ENCODE measurements at regions of chr6 and their contacts with region 1.

Region 1: GRCh38 chr6:35452186-35453090 is at the start of gene FANCE:
- DNase-seq: peak; percentile 95
- H3K4me3 Mint-ChIP-seq: peak within 1 kb of the TSS; percentile 79
- H3K27ac Mint-ChIP-seq: no peak within 1 kb of the TSS
- H3K4me1 Mint-ChIP-seq: peaks cover 31% of the 10 kb centered on the region
- H3K27me3 Mint-ChIP-seq: no peaks in the 10 kb centered on the region
- total RNA-seq, gene FANCE: 16.3 TPM

Region 2: GRCh38 chr6:35327349-35328027 is 125.0 kb before region 1 on chr6:
- CTCF ChIA-PET with region 1: interaction called, 12 read pairs
- intact Hi-C with region 1: no loop called
- DNase-seq: peak; percentile 91
- H3K4me3 Mint-ChIP-seq: no peak overlapping the region
- H3K27ac Mint-ChIP-seq: peak overlapping the region; percentile 70
- H3K4me1 Mint-ChIP-seq: peaks cover 19% of the 10 kb centered on the region
- H3K27me3 Mint-ChIP-seq: no peaks in the 10 kb centered on the region

Region 3: GRCh38 chr6:35415065-35415991 is 37.1 kb before region 1 on chr6:
- CTCF ChIA-PET with region 1: interaction called, 19 read pairs
- intact Hi-C with region 1: loop called (anchors 2 kb)
- DNase-seq: peak; percentile 51
- H3K4me3 Mint-ChIP-seq: no peak overlapping the region
- H3K27ac Mint-ChIP-seq: peak overlapping the region; percentile 10
- H3K4me1 Mint-ChIP-seq: peaks cover 44% of the 10 kb centered on the region
- H3K27me3 Mint-ChIP-seq: no peaks in the 10 kb centered on the region

Region 4: GRCh38 chr6:35468181-35468979 is 15.9 kb after region 1 on chr6 and contains the start of gene RPL10A:
- CTCF ChIA-PET with region 1: interaction called, 7 read pairs
- intact Hi-C with region 1: loop called (anchors 1 kb)
- DNase-seq: peak; percentile 98
- H3K4me3 Mint-ChIP-seq: peak within 1 kb of the TSS; percentile 95
- H3K27ac Mint-ChIP-seq: peak within 1 kb of the TSS; percentile 95
- H3K4me1 Mint-ChIP-seq: peaks cover 39% of the 10 kb centered on the region
- H3K27me3 Mint-ChIP-seq: no peaks in the 10 kb centered on the region
- total RNA-seq, gene RPL10A: 2,437 to 2,507 TPM

Region 5: DNA sequence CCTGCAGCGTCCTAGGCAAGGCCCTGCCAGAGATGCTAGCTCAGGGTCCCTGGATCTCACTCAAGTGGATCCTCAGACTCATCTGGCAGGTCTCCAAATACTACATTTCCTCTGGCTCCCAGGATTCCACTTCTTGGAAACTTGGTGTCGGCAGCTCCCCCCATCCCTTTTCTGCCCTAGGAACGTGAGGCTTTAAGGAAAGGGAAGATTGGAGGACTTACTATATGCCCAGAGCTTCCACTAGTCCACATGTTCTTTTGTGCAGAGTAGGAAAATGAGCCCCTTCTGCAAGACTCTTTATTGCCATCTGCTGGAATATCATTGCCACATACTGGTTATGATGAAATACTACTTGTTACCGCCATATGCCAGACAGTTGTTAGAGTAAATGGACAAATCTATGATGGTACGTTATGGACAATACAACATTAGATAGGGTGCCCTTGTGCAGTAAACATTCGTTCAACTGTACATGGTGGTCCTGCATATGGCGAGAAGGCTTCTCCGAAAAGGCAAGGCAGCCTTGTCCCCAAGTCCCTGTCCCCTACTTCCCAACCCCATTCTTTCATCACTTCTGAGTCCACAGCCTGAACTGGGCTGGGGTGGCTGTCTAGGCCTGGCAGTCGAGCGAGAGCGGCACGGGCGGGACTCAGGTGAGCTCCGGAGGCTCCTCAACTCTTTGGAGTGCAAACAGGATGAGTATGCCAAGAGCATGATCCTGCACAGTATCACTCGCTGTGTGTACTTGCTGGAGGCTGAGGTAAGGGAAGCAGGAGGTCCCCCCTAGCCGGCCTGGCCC is 285.2 kb after region 1 on chr6:
- CTCF ChIA-PET with region 1: no interaction called
- intact Hi-C with region 1: loop called (anchors 1 kb)
- DNase-seq: no peak
- H3K4me3 Mint-ChIP-seq: peak overlapping the region; percentile 29
- H3K27ac Mint-ChIP-seq: peak overlapping the region; percentile 77
- H3K4me1 Mint-ChIP-seq: peaks cover 47% of the 10 kb centered on the region
- H3K27me3 Mint-ChIP-seq: no peaks in the 10 kb centered on the region

Region 6: DNA sequence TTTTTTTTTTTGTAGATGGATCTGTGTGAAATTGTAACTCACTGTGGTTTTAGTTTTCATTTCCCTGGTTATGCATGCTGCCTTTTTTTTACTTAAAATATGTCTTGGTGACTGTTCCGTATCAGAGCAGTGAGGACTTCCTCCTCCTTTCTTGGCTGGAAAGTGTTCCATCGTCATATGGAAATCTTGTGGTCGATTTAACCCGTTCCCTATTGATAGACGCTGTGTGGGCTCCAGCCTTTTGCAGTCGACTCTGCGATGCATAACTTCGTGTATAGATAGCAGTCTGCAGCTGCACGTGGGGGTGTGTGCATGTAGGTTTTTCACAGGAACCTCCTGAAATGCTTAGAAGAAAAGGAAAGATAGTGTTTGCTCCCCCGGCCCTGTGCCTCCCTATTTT is 789.3 kb after region 1 on chr6:
- CTCF ChIA-PET with region 1: no interaction called
- intact Hi-C with region 1: no loop called
- DNase-seq: peak; percentile 17
- H3K4me3 Mint-ChIP-seq: no peak overlapping the region
- H3K27ac Mint-ChIP-seq: no peak overlapping the region
- H3K4me1 Mint-ChIP-seq: peaks cover 12% of the 10 kb centered on the region
- H3K27me3 Mint-ChIP-seq: peaks cover 3% of the 10 kb centered on the region